Dorsolateral prefrontal cortex (tissue), 120 donors: ENCODE measurements at regions of chr17 and their contacts with region 1.

Region 1: GRCh38 chr17:4220655-4221054 is 43.1 kb downstream of the ANKFY1 start:
- DNase-seq: no peak
- H3K4me3 ChIP-seq: peak overlapping the region in 2 of 59 donors; percentile 10 to 23
- H3K27ac ChIP-seq: peak overlapping the region in 34 of 59 donors; percentile 2 to 69 (median 38)
- H3K27me3 ChIP-seq: no peaks in the 10 kb centered on the region
- CTCF ChIP-seq: no peak

Region 2: DNA sequence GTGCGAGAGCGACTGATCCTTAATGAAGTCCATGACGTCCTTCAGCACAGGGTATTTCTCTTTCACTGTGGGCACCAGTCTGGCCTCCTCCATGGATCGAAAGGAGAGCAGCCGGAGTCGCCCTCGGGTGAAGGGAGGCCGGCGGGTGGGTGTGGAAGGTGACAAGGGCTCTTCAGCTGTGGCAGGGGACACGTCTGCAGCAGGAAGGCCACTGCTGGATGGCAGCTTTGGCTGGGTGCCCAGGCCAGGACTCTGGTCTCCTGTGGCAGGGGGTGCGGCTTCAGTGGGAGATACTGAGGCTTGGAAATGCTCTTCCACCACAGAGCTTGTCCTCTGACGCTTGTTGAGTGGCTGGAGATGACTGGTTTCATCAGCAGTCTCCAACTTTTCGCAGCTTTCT is 156.3 kb before region 1 on chr17:
- intact Hi-C with region 1: no loop called
- DNase-seq: no peak
- H3K4me3 ChIP-seq: no peak overlapping the region
- H3K27ac ChIP-seq: no peak overlapping the region
- H3K27me3 ChIP-seq: no peaks in the 10 kb centered on the region
- CTCF ChIP-seq: no peak

Region 3: GRCh38 chr17:4263282-4264215 is 42.9 kb after region 1 on chr17 and contains the start of gene ANKFY1:
- intact Hi-C with region 1: loop called (anchors 5 to 10 kb)
- DNase-seq: peak; percentile 91 to 97 (median 96)
- H3K4me3 ChIP-seq: peak within 1 kb of the TSS; percentile 63 to 99 (median 88)
- H3K27ac ChIP-seq: peak within 1 kb of the TSS in 58 of 59 donors; percentile 1 to 95 (median 82)
- H3K27me3 ChIP-seq: no peaks in the 10 kb centered on the region
- CTCF ChIP-seq: peak in 49 of 56 donors; percentile 5 to 62 (median 37)
- total RNA-seq, gene ANKFY1: 46.8 to 109 (median 81.7) TPM

Region 4: DNA sequence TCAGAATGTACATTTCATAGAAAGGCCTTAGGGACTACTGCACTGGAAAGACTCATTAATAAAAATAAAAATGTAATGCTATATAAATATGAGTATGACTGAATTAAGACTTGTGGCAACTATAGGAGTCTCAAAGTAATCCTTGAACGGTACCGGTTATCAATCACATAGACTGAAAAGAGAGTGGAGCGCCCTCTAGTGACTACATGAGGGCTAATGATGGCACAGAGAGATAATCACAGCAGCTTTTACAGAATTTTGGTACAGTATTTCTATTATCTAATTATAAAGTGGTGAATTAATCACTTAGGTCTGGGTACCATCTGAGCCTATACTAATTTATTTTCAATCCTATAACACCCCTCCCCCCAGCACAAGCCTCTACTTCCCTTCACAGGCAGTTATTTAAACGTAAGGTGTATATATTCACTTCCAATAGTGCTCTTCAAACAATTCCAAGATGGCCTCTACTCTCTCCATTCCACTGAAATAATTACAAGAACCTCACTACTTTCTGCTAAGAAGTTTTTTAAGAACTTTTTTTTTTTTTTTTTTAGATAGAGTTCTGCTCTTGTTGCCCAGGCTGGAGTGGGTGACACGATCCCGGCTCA is 83.9 kb after region 1 on chr17:
- intact Hi-C with region 1: loop called (anchors 2 to 5 kb)
- DNase-seq: peak in 3 of 10 donors; percentile 37 to 71 (median 50)
- H3K4me3 ChIP-seq: no peak overlapping the region
- H3K27ac ChIP-seq: peak overlapping the region in 27 of 59 donors; percentile 2 to 69 (median 27)
- H3K27me3 ChIP-seq: no peaks in the 10 kb centered on the region
- CTCF ChIP-seq: peak; percentile 50 to 91 (median 72)

Region 5: GRCh38 chr17:4412933-4413831 is 192.5 kb after region 1 on chr17:
- intact Hi-C with region 1: loop called (anchors 1 kb)
- DNase-seq: peak; percentile 87 to 95 (median 92)
- H3K4me3 ChIP-seq: peak overlapping the region in 12 of 59 donors; percentile 1 to 39 (median 22)
- H3K27ac ChIP-seq: peak overlapping the region in 2 of 59 donors; percentile 11 to 18
- H3K27me3 ChIP-seq: no peaks in the 10 kb centered on the region
- CTCF ChIP-seq: peak; percentile 65 to 98 (median 94)